ENCODE measurements at regions of chr12 and their contacts with region 1.

Region 1: DNA sequence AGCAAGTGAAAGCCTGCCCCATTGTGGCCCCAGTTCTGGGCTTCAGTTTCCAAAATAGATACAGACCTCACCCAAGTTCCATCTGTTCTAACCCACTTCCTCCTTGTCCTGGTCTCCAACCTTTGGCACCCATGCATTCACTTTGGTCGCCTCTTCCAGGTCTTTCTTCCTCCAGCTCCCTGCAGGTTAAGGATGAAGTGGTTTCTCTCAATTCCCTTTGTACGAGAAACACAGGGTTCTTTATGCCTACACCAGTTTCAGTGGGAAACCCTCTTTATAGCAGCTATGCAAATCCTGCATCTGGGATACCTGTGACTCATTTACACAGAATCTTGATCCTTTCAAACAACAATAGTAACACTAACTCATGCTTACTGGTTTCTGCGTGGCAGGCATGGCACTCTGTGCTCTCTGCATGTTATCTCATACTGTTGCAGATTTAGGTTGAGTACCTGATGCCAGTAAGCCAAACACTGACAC is 110.6 kb upstream of the AMIGO2 start:
- DNase-seq: no peak
- ATAC-seq: no peak
- H3K4me3 ChIP-seq: no peak overlapping the region
- H3K4me3 Mint-ChIP-seq: peak overlapping the region; percentile 42 to 87 (median 76)
- H3K27ac ChIP-seq: peak overlapping the region; percentile 61
- H3K27ac Mint-ChIP-seq: peak overlapping the region; percentile 81 to 98 (median 93)
- H3K4me1 ChIP-seq: peaks cover 52 to 77% of the 10 kb centered on the region in 2 donors
- H3K4me1 Mint-ChIP-seq: peaks cover 69 to 98% (median 93%) of the 10 kb centered on the region in 7 donors
- H3K27me3 ChIP-seq: no peaks in the 10 kb centered on the region
- H3K27me3 Mint-ChIP-seq: no peaks in the 10 kb centered on the region

Region 2: DNA sequence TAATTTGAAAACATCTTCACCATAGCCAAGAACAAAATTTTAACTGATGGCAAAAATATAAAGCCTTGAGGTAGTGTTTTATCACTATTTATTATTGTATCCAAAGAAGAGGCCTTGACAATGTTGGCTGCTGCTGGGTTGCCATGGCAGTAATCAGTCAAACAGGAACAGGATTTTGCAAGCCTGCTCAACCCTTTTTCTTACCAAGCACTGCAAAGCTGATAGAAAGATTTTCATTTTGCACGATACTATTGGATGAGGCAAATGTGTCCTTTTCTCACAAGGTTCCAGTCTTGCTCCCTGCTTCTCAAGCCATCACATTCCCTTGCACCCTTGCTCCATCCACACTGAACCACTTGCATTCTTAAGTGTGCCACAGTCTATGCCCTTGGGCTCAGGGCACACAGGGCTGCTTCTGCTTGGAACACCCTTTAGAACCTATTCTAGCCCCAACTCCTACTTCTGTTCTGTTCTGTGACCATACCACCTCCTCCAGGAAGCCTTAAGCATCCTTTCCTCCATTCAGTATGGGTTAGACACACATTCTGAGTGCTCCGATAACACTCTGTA is 34.1 kb before region 1 on chr12:
- CTCF ChIA-PET with region 1: no interaction called
- POLR2A ChIA-PET with region 1: interaction called, 4 read pairs
- intact Hi-C with region 1: loop called in 1 of 2 experiments (anchors 5 kb)
- DNase-seq: peak in 5 of 9 donors; percentile 10 to 49 (median 26)
- ATAC-seq: peak; percentile 74
- H3K4me3 ChIP-seq: no peak overlapping the region
- H3K4me3 Mint-ChIP-seq: peak overlapping the region in 7 of 10 donors; percentile 18 to 67 (median 23)
- H3K27ac ChIP-seq: peak overlapping the region; percentile 45
- H3K27ac Mint-ChIP-seq: peak overlapping the region in 8 of 9 donors; percentile 10 to 87 (median 76)
- H3K4me1 ChIP-seq: peaks cover 13 to 14% of the 10 kb centered on the region in 2 donors
- H3K4me1 Mint-ChIP-seq: peaks cover 15 to 63% (median 37%) of the 10 kb centered on the region in 7 donors
- H3K27me3 ChIP-seq: no peaks in the 10 kb centered on the region
- H3K27me3 Mint-ChIP-seq: no peaks in the 10 kb centered on the region

Region 3: GRCh38 chr12:47202176-47202575 is 11.9 kb after region 1 on chr12:
- CTCF ChIA-PET with region 1: interaction called, 5 read pairs
- POLR2A ChIA-PET with region 1: interaction called, 36 read pairs
- intact Hi-C with region 1: loop called (anchors 1 to 2 kb)
- DNase-seq: no peak
- ATAC-seq: no peak
- H3K4me3 ChIP-seq: no peak overlapping the region
- H3K4me3 Mint-ChIP-seq: peak overlapping the region in 5 of 10 donors; percentile 17 to 52 (median 24)
- H3K27ac ChIP-seq: peak overlapping the region; percentile 41
- H3K27ac Mint-ChIP-seq: peak overlapping the region in 8 of 9 donors; percentile 42 to 98 (median 72)
- H3K4me1 ChIP-seq: peaks cover 48 to 49% of the 10 kb centered on the region in 2 donors
- H3K4me1 Mint-ChIP-seq: peaks cover 47 to 97% (median 85%) of the 10 kb centered on the region in 7 donors
- H3K27me3 ChIP-seq: no peaks in the 10 kb centered on the region
- H3K27me3 Mint-ChIP-seq: no peaks in the 10 kb centered on the region